ENCODE measurements at regions of chr5 and their contacts with region 1.

Region 1: DNA sequence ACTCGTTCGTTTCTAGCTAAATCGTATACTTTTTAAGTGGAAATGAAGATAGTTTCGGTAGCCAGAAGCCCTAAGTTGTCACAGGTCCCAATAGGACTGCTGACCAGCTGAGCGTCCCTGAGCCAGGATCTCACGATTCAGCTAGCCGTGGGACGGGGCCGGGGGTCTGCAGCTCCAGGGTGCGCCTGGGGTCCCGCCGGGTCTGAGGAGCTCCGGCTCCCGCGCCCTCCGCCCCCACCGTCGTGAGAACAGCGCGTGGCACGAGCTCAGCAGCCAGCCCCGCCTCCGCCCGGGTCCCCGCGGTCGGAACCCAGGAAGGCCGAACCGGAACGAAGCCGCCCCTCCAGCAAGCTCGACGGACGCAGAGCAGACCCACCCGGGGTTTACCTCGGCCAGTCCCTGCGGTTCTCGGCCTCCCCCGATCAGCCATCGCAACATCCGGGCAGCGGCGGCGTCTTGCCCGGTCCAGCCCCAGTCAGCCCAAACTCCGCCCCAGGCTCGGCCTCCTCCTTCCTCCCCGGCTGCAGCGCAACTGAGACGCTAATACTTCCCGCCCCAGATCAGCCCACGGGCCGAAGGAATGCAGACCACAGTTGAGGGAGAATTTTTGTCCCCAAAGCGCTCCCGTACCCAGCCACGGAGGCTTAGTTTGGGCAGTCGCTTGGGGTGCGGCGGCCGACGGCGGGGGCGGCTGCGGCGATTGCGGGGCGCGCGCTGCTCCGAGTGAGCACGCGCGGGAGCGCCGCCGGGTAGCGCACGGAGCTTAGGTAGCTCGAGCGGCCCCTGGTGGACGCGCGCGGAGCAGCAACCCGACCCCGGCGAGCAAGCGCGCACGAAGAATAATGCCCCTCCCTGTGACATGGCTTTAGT is at the start of gene WDR41:
- DNase-seq: peak; percentile 81
- H3K4me3 Mint-ChIP-seq: peak within 1 kb of the TSS; percentile 91
- H3K27ac Mint-ChIP-seq: peak within 1 kb of the TSS; percentile 90
- H3K4me1 Mint-ChIP-seq: peaks cover 28% of the 10 kb centered on the region
- H3K27me3 Mint-ChIP-seq: peaks cover 13% of the 10 kb centered on the region
- total RNA-seq, gene WDR41: 27.0 and 27.2 TPM in 2 replicates

Region 2: GRCh38 chr5:76867827-76868693 is 624.0 kb before region 1 on chr5:
- intact Hi-C with region 1: loop called (anchors 1 kb)
- DNase-seq: peak; percentile 50
- H3K4me3 Mint-ChIP-seq: no peak overlapping the region
- H3K27ac Mint-ChIP-seq: no peak overlapping the region
- H3K4me1 Mint-ChIP-seq: peaks cover 5% of the 10 kb centered on the region
- H3K27me3 Mint-ChIP-seq: peaks cover 2% of the 10 kb centered on the region

Region 3: GRCh38 chr5:77076961-77077823 is 414.8 kb before region 1 on chr5:
- intact Hi-C with region 1: loop called (anchors 5 kb)
- DNase-seq: peak; percentile 46
- H3K4me3 Mint-ChIP-seq: peak overlapping the region; percentile 61
- H3K27ac Mint-ChIP-seq: no peak overlapping the region
- H3K4me1 Mint-ChIP-seq: no peaks in the 10 kb centered on the region
- H3K27me3 Mint-ChIP-seq: peaks cover 3% of the 10 kb centered on the region

Region 4: GRCh38 chr5:77230721-77231470 is 261.1 kb before region 1 on chr5:
- intact Hi-C with region 1: loop called (anchors 5 kb)
- DNase-seq: no peak
- H3K4me3 Mint-ChIP-seq: no peak overlapping the region
- H3K27ac Mint-ChIP-seq: no peak overlapping the region
- H3K4me1 Mint-ChIP-seq: no peaks in the 10 kb centered on the region
- H3K27me3 Mint-ChIP-seq: peaks cover 11% of the 10 kb centered on the region

Region 5: GRCh38 chr5:77379558-77380061 is 112.4 kb before region 1 on chr5:
- intact Hi-C with region 1: loop called (anchors 1 kb)
- DNase-seq: peak; percentile 32
- H3K4me3 Mint-ChIP-seq: no peak overlapping the region
- H3K27ac Mint-ChIP-seq: peak overlapping the region; percentile 37
- H3K4me1 Mint-ChIP-seq: peaks cover 30% of the 10 kb centered on the region
- H3K27me3 Mint-ChIP-seq: peaks cover 2% of the 10 kb centered on the region

Region 6: GRCh38 chr5:77775790-77776553 is 284.0 kb after region 1 on chr5 and contains the start of gene TBCA:
- intact Hi-C with region 1: loop called (anchors 2 kb)
- DNase-seq: peak; percentile 92
- H3K4me3 Mint-ChIP-seq: peak within 1 kb of the TSS; percentile 91
- H3K27ac Mint-ChIP-seq: peak within 1 kb of the TSS; percentile 97
- H3K4me1 Mint-ChIP-seq: peaks cover 48% of the 10 kb centered on the region
- H3K27me3 Mint-ChIP-seq: peaks cover 2% of the 10 kb centered on the region
- total RNA-seq, gene TBCA: 179 and 212 TPM in 2 replicates

Region 7: DNA sequence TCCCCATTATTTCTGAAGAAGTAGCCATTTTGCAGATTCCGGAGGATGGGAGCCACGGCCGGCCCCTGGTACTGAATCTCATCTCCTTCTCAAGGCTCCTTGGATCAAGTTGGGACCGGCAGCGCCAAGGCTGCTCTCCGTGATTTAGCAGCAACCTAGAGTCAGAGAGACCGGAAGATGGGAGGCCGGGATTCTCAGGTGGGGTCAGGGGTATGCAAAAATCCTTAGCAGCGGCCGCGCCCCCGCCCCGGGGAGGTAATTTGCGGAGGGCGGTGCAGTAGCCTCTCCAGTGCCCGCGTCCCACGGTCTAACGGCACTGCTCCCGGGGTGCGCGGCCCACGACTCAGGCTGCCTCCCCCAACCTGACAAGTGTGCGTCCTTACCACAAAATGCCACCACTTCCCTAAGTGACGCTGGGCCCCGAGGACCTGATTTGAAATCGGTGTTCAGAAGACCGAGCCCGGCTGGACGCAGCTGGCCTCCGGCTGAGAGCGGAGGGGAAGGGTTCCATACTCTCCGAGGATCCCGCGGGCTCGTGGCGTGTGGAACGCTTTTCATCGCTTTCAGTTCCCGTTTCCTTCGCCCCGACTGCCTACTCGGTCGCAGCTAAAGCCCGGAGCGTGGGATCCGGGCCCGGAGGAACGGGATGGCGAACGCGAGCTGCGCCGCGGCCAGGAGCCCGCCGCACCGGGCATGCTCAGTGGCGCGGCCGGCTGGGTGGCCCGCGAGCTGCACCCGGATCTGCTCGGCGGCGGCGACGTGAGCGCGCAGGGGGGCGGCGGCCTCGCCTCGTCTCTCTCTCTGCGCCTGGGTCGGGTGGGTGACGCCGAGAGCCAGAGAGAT is 868.0 kb after region 1 on chr5 and contains the start of gene SCAMP1:
- intact Hi-C with region 1: loop called (anchors 5 kb)
- DNase-seq: peak; percentile 93
- H3K4me3 Mint-ChIP-seq: peak within 1 kb of the TSS; percentile 98
- H3K27ac Mint-ChIP-seq: peak within 1 kb of the TSS; percentile 92
- H3K4me1 Mint-ChIP-seq: peaks cover 32% of the 10 kb centered on the region
- H3K27me3 Mint-ChIP-seq: no peaks in the 10 kb centered on the region
- total RNA-seq, gene SCAMP1: 21.3 and 21.7 TPM in 2 replicates

Region 8: DNA sequence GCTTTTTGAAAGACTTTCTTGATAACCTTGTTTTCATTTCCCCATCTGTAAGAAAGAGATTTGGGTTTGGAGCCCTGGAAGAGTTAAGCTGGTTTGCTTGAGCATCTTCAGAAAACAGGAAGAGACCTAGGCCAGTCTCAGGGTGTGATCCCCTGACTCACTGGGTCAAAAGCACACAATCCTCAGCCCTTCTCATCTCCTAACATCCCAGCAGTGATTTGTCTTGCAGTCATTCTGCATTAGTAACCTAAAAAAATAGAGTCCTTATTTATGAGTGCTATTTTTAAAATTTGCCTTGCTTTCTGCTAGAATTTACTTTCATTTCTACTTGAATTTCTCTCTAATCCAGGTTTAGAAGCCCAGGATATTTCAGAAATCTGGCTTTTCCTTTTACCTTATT is 1509.5 kb after region 1 on chr5:
- intact Hi-C with region 1: no loop called
- DNase-seq: no peak
- H3K4me3 Mint-ChIP-seq: no peak overlapping the region
- H3K27ac Mint-ChIP-seq: no peak overlapping the region
- H3K4me1 Mint-ChIP-seq: no peaks in the 10 kb centered on the region
- H3K27me3 Mint-ChIP-seq: peaks cover 27% of the 10 kb centered on the region

Measured in activated T-helper 1 cell treated with anti-CD3 and anti-CD28 coated beads, Interleukin-12 subunit alpha, Interleukin-12 subunit beta, Interleukin-2, Interleukin-4 antibody, amounts not matched to agents 30 ng/mL and 10 ng/mL and 1 ng/mL, durations not matched to agents 14 hours and 24 hours and 36 hours (primary cell).